ENCODE measurements at regions of chr12 and their contacts with region 1.

Region 1: DNA sequence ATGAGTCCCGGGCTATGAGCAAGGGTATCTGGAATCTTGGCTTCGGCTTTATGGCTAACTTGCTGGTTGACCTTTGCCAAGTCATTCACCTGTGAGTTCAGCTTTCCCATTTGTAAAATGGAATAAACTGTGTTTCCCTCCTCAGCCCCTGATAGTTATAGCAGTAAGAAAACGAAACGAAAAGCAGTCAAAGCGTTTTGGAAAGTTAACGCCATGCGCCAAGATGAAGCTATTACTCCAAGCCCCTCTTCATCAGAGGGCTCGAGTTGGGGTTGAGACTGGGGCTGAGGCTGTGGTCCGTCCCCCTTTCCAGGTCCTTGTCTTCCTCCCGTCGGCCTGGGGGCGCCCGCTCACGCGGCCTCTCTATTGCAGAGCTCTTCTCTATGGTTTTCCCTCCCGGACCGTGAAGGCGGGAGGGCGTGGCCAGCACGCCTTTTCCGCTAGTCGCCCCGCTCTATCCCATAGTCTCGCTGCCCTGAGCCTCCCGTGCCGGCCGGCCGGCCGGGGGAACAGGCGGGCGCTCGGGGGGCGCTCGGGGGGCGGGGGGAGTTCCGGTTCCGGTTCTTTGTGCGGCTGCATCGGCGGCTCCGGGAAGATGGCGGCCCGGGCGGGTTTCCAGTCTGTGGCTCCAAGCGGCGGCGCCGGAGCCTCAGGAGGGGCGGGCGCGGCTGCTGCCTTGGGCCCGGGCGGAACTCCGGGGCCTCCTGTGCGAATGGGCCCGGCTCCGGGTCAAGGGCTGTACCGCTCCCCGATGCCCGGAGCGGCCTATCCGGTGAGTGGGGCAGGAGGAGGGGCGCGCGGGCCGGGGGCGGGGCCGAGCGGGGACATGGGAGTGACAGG is at the start of gene SMARCD1:
- DNase-seq: peak; percentile 72
- ATAC-seq: peak; percentile 96
- H3K4me3 ChIP-seq: peak within 1 kb of the TSS; percentile 80 to 88
- H3K27ac ChIP-seq: peak within 1 kb of the TSS; percentile 97
- H3K4me1 ChIP-seq: peaks cover 6% of the 10 kb centered on the region; the same call in 1 of the 2 replicates
- H3K27me3 ChIP-seq: no peaks in the 10 kb centered on the region
- CTCF ChIP-seq: peak; percentile 93
- total RNA-seq, gene SMARCD1: 84.9 TPM

Region 2: GRCh38 chr12:49909826-49910225 is 175.2 kb before region 1 on chr12:
- CTCF ChIA-PET with region 1: interaction called, 11 read pairs
- POLR2A ChIA-PET with region 1: no interaction called
- in situ Hi-C with region 1: no loop called
- intact Hi-C with region 1: no loop called
- DNase-seq: no peak
- ATAC-seq: no peak
- H3K4me3 ChIP-seq: no peak overlapping the region
- H3K27ac ChIP-seq: no peak overlapping the region
- H3K4me1 ChIP-seq: 0 out of 2 replicates have a peak, but pooled peaks cover 7% of the 10 kb centered on the region
- H3K27me3 ChIP-seq: no peaks in the 10 kb centered on the region
- CTCF ChIP-seq: no peak

Region 3: DNA sequence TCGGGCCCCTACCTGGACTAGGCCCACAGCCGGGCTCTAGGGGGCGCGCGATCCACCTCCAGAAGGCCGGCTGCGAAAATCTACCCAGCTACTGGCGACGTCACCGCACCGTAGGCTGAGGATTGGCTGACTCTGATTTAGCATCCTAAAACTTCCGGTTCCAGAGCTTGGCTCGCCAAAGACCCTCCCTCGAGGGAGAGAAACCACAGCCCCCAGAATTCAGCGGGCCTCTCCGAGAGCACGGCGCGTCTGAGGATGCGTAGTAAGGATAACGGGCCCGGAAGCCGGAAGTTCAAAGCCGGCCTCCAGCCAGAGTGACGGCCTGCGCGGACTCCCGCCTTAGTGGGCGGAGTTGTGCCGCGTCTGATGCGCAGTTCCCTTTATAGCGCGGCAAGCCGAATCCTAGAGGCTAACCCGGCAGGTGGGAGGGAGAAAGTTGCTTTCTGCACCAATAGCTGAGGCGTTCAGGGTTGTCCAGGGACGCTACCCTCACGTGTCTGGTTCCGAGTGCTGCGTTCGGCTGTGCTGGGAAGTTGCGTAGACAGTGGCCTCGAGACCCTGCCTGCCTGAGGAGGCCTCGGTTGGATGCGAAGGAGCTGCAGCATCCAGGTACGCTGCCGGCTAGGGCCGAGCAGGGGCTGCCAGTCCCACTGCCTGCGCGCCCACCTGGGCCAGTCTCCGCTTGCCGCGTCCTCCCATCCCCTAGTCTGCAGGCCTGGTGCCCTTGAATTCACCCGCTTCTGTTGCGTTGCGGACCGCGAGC is 26.9 kb after region 1 on chr12 and contains the start of gene COX14:
- CTCF ChIA-PET with region 1: interaction called, 11 read pairs
- POLR2A ChIA-PET with region 1: interaction called, 13 read pairs
- in situ Hi-C with region 1: no loop called
- intact Hi-C with region 1: no loop called
- DNase-seq: peak; percentile 99
- ATAC-seq: peak; percentile 94
- H3K4me3 ChIP-seq: peak within 1 kb of the TSS; percentile 64 to 99
- H3K27ac ChIP-seq: peak within 1 kb of the TSS; percentile 71
- H3K4me1 ChIP-seq: peaks cover 15% of the 10 kb centered on the region
- H3K27me3 ChIP-seq: no peaks in the 10 kb centered on the region
- CTCF ChIP-seq: peak; percentile 99
- total RNA-seq, gene COX14: 74.5 TPM

Region 4: DNA sequence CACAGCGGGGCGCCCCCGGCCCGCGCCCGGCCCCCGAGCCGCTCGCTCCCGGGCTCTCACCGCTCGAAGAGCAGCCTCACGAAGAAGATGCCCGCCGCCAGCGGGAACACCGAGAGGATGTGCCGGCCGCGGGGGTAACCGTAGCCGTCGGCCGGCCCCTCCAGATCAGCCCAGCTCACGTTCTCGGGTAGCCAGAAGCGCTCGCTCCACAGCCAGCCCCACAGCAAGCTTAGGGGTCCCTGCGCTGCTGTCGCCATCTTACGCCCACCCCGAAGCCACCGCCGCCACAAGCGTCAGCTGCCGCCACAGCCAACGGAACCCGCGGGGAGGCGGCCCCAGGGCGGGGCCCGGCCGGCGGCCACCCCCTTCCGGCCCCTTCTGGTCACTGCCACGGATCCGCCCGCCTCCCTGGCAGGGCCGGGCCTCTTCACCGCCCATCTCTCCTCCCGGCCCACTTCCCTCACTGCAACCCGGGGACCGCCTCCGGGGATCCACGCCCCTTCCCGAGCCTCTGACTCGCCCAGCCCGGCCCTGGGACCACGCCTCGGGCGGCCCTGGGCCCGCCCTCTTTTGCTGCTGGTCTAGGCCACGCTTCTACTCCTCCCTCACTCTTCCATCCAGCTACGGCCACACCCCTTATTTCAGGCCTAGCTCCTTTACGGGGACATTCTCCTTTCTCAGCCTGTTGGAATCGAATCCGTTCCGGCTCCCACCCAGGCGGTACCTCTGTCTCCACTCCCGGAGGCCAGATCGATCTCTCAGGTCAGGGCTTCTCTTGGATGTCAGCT is 82.2 kb after region 1 on chr12 and contains the start of gene CERS5:
- CTCF ChIA-PET with region 1: interaction called, 11 read pairs
- POLR2A ChIA-PET with region 1: no interaction called
- in situ Hi-C with region 1: no loop called
- intact Hi-C with region 1: no loop called
- DNase-seq: peak; percentile 92
- ATAC-seq: peak; percentile 99
- H3K4me3 ChIP-seq: peak within 1 kb of the TSS; percentile 60 to 81
- H3K27ac ChIP-seq: peak within 1 kb of the TSS; percentile 86
- H3K4me1 ChIP-seq: peaks cover 8% of the 10 kb centered on the region
- H3K27me3 ChIP-seq: no peaks in the 10 kb centered on the region
- CTCF ChIP-seq: no peak
- total RNA-seq, gene CERS5: 50.5 TPM

Region 5: DNA sequence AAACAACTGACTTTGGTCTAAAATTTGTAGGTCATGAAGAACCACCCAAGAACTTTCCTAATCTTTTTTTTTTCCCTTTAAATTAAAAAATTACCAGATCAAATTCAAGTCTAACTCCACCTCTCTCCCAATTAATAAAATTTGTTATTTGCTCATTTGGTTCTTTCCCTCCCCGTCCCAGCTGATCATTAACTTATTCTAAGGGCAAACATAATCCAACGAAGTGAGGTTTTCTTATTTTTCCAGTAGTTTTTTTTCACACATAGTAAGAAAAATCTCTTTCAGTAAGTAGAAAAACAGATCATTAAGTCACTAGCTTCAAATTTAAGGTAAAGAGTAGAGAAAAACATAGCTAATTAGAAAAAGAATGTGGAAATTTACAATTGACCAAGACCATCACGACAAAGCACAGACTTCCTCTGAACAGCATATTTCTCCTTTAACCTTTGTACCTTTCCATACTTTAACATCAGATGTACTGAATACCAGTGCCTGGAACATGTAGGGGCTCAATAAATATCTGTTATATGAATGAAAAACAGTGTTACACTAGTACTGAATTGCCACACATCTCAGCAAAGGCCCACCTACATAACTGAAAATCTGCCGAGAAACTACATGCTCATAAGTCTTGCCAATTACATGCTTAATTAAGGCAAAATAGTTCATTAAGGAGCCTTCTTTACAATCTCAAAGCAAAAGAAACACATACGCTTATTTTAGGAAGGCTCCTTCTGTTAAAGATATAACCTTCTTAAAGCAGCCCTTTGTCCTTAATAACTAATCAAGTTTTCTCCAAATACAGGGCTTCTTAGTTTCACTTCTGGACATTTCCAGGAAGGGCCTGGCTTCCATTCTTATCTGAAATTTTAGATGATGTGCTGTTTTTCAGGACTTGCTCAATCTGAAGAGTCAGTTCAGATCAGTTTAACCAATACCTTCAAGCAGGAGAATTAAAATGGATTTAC is 186.6 kb after region 1 on chr12:
- CTCF ChIA-PET with region 1: no interaction called
- POLR2A ChIA-PET with region 1: no interaction called
- in situ Hi-C with region 1: no loop called
- intact Hi-C with region 1: no loop called
- DNase-seq: no peak
- ATAC-seq: no peak
- H3K4me3 ChIP-seq: peak overlapping the region; percentile 19 to 45
- H3K27ac ChIP-seq: peak overlapping the region; percentile 98
- H3K4me1 ChIP-seq: peaks cover 51% of the 10 kb centered on the region
- H3K27me3 ChIP-seq: no peaks in the 10 kb centered on the region
- CTCF ChIP-seq: no peak

Region 6: GRCh38 chr12:50375802-50376201 is 290.8 kb after region 1 on chr12:
- CTCF ChIA-PET with region 1: no interaction called
- POLR2A ChIA-PET with region 1: interaction called, 20 read pairs
- in situ Hi-C with region 1: no loop called
- intact Hi-C with region 1: no loop called
- DNase-seq: no peak
- ATAC-seq: peak; percentile 26; the same call in 1 of the 2 replicates
- H3K4me3 ChIP-seq: no peak overlapping the region
- H3K27ac ChIP-seq: no peak overlapping the region
- H3K4me1 ChIP-seq: no peaks in the 10 kb centered on the region
- H3K27me3 ChIP-seq: no peaks in the 10 kb centered on the region
- CTCF ChIP-seq: no peak